ENCODE measurements at regions of chr12 and their contacts with region 1.

Region 1: DNA sequence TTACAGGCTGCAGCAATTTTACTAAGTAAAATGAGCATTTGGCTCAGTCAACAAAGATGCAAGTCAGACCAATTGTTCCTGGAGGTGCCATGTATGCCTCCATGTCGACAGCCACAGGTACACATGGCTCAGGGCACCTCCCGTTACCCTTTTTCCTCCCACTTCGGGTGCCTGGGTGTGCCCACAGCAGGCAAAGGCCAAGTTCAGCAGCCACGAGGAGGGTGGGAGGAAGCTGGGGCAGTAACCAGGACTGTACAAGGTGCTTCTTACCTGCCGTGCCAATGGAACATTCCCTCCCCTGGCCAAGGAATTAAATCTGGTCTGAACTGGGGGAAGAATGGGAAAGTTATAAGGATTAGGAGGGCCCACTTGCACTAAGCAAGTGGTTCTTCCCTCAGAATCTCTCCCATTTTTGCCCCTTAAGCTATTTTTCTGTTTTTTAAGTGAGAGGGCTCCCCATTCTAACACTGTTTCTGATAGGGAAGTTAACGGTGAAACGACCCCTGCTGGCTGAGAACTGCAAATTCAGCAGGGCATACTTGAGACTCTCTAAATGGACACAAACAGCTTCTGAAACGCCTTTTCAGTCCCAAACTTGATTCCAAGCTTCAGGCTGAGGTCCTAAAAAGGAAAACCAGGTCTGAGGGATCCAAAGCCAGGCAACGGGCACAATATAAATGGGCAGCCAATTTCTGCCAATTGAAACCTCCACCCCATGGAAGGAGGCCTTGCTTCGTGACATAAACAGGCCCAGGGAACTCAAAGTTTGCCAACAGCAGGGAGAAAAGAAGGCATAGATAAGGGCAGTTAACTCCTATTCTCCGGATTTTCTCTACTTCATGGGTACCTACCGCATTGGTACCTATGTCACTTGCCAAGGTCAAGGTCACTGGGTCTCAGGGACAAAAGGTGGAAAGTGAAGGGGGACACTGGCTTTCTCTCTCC is 24.8 kb downstream of the CLECL1 start:
- DNase-seq: peak in 1 of 2 experiments; percentile 63
- H3K4me3 ChIP-seq: no peak overlapping the region
- H3K27ac ChIP-seq: no peak overlapping the region
- H3K4me1 ChIP-seq: peaks cover 0 to 2% (median 0%) of the 10 kb centered on the region in 4 experiments; a peak in 1 of 7 replicates
- H3K27me3 ChIP-seq: no peaks in the 10 kb centered on the region
- CTCF ChIP-seq: peak; percentile 10 to 83 (median 66)
- EP300 ChIP-seq: no peak
- POLR2A ChIP-seq: no peak
- RAD21 ChIP-seq: peak; percentile 58 to 63

Region 2: GRCh38 chr12:9634177-9634803 is 73.8 kb before region 1 on chr12:
- CTCF ChIA-PET with region 1: interaction called, 62 read pairs
- POLR2A ChIA-PET with region 1: no interaction called
- DNase-seq: peak in 1 of 2 experiments; percentile 71
- H3K4me3 ChIP-seq: no peak overlapping the region
- H3K27ac ChIP-seq: no peak overlapping the region
- H3K4me1 ChIP-seq: no peaks in the 10 kb centered on the region
- H3K27me3 ChIP-seq: no peaks in the 10 kb centered on the region
- CTCF ChIP-seq: peak in 2 of 3 experiments; percentile 46 to 63; a peak in 2 of 4 replicates
- EP300 ChIP-seq: no peak
- POLR2A ChIP-seq: no peak
- RAD21 ChIP-seq: peak; percentile 65 to 73

Region 3: GRCh38 chr12:9673404-9674225 is 34.5 kb before region 1 on chr12:
- CTCF ChIA-PET with region 1: interaction called, 10 read pairs
- POLR2A ChIA-PET with region 1: no interaction called
- DNase-seq: no peak
- H3K4me3 ChIP-seq: no peak overlapping the region
- H3K27ac ChIP-seq: no peak overlapping the region
- H3K4me1 ChIP-seq: peaks cover 0 to 4% (median 0%) of the 10 kb centered on the region in 4 experiments; a peak in 2 of 7 replicates
- H3K27me3 ChIP-seq: no peaks in the 10 kb centered on the region
- CTCF ChIP-seq: no peak
- EP300 ChIP-seq: no peak
- POLR2A ChIP-seq: no peak
- RAD21 ChIP-seq: no peak

Region 4: GRCh38 chr12:9721394-9722092 is 13.4 kb after region 1 on chr12:
- CTCF ChIA-PET with region 1: interaction called, 16 read pairs
- POLR2A ChIA-PET with region 1: interaction called, 4 read pairs
- DNase-seq: no peak
- H3K4me3 ChIP-seq: no peak overlapping the region
- H3K27ac ChIP-seq: no peak overlapping the region
- H3K4me1 ChIP-seq: no peaks in the 10 kb centered on the region
- H3K27me3 ChIP-seq: no peaks in the 10 kb centered on the region
- CTCF ChIP-seq: no peak
- EP300 ChIP-seq: no peak
- POLR2A ChIP-seq: no peak
- RAD21 ChIP-seq: no peak

Measured in H1 (cell line).